ENCODE measurements at regions of chr2 and their contacts with region 1.

Region 1: DNA sequence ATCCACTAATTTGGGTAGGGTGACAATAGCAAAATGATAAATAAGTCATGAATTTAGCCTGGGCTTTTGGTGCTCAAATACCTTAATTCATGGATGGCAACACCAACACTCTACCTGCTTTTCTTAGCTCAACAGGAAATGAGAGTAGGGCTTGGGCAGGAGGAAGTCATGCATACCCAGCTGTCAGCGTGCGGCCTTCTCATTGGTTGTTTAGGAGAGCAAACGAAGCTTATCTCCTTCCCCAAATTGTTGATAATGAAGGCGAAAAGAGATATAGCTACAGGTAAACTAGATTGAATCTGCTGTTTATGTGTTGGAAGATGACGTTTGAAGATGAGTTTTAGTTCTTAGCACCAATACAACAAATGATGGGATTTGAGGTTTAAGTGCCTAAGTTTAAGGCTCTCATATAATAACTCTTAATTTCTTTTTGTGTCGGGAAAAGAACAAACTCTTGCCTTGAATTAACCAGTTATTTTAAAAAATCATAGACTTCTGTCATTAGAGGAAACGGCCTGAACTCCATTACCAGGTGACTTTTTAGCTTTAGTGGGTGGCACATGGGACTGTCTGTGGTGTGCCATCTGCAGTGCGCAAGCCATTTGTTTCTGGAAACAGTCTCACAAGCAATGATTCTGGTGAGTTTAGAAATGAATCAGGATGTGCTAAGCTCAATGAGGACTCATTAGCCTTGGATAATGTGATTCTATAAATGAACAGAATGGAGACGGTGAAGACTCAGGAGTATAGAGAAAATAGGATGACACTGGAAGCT is 19.8 kb downstream of the MAP4K4 start:
- DNase-seq: peak; percentile 75
- H3K4me3 Mint-ChIP-seq: peak overlapping the region; percentile 27
- H3K27ac Mint-ChIP-seq: peak overlapping the region; percentile 88
- H3K4me1 Mint-ChIP-seq: peaks cover 85% of the 10 kb centered on the region
- H3K27me3 Mint-ChIP-seq: no peaks in the 10 kb centered on the region

Region 2: GRCh38 chr2:101410716-101411211 is 306.5 kb before region 1 on chr2:
- CTCF ChIA-PET with region 1: no interaction called
- POLR2A ChIA-PET with region 1: no interaction called
- intact Hi-C with region 1: no loop called
- DNase-seq: no peak
- H3K4me3 Mint-ChIP-seq: no peak overlapping the region
- H3K27ac Mint-ChIP-seq: no peak overlapping the region
- H3K4me1 Mint-ChIP-seq: no peaks in the 10 kb centered on the region
- H3K27me3 Mint-ChIP-seq: no peaks in the 10 kb centered on the region

Region 3: GRCh38 chr2:101473911-101474701 is 243.2 kb before region 1 on chr2:
- CTCF ChIA-PET with region 1: no interaction called
- POLR2A ChIA-PET with region 1: interaction called, 5 read pairs
- intact Hi-C with region 1: loop called (anchors 5 kb)
- DNase-seq: peak; percentile 65
- H3K4me3 Mint-ChIP-seq: peak overlapping the region; percentile 80
- H3K27ac Mint-ChIP-seq: peak overlapping the region; percentile 82
- H3K4me1 Mint-ChIP-seq: peaks cover 7% of the 10 kb centered on the region
- H3K27me3 Mint-ChIP-seq: peaks cover 2% of the 10 kb centered on the region

Region 4: GRCh38 chr2:101597351-101597944 is 119.8 kb before region 1 on chr2:
- CTCF ChIA-PET with region 1: no interaction called
- POLR2A ChIA-PET with region 1: no interaction called
- intact Hi-C with region 1: no loop called
- DNase-seq: no peak
- H3K4me3 Mint-ChIP-seq: no peak overlapping the region
- H3K27ac Mint-ChIP-seq: no peak overlapping the region
- H3K4me1 Mint-ChIP-seq: peaks cover 10% of the 10 kb centered on the region
- H3K27me3 Mint-ChIP-seq: no peaks in the 10 kb centered on the region

Region 5: DNA sequence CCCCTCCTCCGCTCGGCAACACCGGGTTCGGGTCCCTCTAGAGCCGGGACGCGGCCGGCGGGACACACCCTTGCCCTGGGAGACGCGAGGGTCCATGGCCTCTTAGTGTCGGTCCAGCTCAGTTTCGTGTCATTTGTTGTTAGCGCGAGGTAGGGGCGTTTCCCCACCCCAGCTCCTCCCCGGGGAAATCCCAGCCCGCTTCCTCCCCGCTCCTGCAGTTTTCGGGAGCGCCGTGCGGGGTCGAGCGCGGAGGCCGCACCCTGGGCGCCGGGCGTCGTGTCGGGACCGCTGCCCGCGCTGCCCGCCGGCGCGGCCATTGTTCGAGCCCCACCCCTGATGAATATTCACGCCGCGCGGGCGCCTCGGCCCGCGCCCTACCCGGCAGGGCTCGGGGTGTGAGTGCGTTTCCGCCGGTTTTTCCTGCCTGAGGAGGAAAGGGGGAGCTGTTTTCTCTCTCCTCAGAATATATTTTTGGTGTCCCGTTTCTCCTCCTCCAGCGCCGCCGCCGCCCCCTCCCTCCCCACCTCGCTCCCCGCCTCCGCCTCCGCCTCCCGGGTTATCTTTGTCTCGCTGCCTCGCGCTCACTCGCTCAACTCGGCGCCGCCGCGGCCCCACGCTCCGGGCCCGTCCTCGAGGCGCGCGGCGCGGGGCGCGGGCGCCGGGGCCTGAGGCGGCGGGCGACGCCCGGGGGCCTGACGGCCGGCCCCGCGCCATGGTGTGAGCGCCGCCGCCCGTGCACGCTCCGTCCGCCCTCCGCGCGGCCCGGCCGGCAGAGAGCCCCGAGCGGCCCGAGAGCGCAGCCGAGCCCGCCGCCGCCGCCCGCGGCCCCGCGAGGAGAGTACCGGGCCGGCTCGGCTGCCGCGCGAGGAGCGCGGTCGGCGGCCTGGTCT is 19.9 kb before region 1 on chr2 and contains the start of gene MAP4K4:
- CTCF ChIA-PET with region 1: interaction called, 5 read pairs
- POLR2A ChIA-PET with region 1: interaction called, 43 read pairs
- intact Hi-C with region 1: loop called (anchors 1 kb)
- DNase-seq: peak; percentile 80
- H3K4me3 Mint-ChIP-seq: peak within 1 kb of the TSS; percentile 79
- H3K27ac Mint-ChIP-seq: peak within 1 kb of the TSS; percentile 78
- H3K4me1 Mint-ChIP-seq: peaks cover 26% of the 10 kb centered on the region
- H3K27me3 Mint-ChIP-seq: no peaks in the 10 kb centered on the region
- total RNA-seq, gene MAP4K4: 42.1 to 43.4 TPM

Region 6: DNA sequence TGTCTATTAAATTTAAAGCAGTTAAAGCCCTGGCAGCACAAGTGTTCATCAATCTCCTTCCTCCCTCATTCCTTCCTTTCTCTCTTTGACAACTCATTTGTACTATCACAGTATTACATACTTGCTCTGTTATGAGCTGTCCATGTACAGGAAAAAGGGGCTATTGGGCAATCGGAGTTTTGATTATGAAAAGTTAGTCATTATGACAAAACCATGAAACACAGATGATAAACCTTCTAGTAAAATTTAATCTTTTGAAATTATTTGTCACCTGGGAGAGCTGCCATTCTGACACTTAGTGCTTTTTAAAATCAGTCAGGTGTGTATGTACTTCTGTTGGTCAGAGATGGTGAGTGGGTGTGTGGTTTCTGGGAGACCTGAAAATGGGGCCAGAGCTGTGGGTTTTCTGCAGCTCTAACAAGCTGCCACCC is 19.6 kb after region 1 on chr2:
- CTCF ChIA-PET with region 1: interaction called, 12 read pairs
- POLR2A ChIA-PET with region 1: interaction called, 13 read pairs
- intact Hi-C with region 1: loop called (anchors 1 kb)
- DNase-seq: peak; percentile 80
- H3K4me3 Mint-ChIP-seq: no peak overlapping the region
- H3K27ac Mint-ChIP-seq: peak overlapping the region; percentile 59
- H3K4me1 Mint-ChIP-seq: peaks cover 77% of the 10 kb centered on the region
- H3K27me3 Mint-ChIP-seq: no peaks in the 10 kb centered on the region

Region 7: GRCh38 chr2:101831351-101831865 is 114.2 kb after region 1 on chr2:
- CTCF ChIA-PET with region 1: interaction called, 8 read pairs
- POLR2A ChIA-PET with region 1: no interaction called
- intact Hi-C with region 1: loop called (anchors 1 kb)
- DNase-seq: peak; percentile 76
- H3K4me3 Mint-ChIP-seq: no peak overlapping the region
- H3K27ac Mint-ChIP-seq: peak overlapping the region; percentile 71
- H3K4me1 Mint-ChIP-seq: peaks cover 52% of the 10 kb centered on the region
- H3K27me3 Mint-ChIP-seq: no peaks in the 10 kb centered on the region